CD8-positive, alpha-beta T cell (primary cell): ENCODE measurements at regions of chr16 and their contacts with region 1.

Region 1: DNA sequence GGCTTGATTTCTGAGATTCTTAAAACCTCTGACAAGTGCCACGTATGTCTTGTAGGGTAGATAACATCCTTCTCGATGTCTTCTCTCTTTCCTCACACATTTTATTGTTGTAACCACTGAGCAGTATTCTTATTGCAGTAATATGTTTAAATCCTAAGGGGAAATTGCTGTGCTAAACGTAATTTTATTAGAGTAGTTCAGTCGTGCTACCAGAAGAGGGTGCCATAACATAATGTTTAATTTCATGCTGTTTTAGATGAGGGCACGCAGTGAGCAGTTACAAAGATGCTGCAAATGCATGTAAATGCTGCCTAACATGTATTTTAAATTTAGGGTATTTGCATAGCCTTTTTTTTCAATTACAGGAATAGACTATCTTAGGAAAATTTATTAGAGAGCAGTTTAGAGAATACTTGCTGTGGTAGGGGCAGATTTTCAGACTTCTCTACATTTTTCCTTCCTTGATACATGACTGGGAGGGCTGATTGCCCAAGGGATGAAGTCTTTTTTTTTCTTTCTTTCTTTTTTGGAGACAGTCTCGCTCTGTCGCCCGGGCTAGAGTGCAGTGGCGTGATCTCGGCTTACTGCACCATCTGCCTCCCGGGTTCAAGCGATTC is 51.7 kb downstream of the GAN start:
- DNase-seq: peak in 3 of 9 experiments; percentile 18 to 72 (median 64)
- ATAC-seq: peak; percentile 83
- H3K4me3 ChIP-seq: no peak overlapping the region
- H3K4me3 Mint-ChIP-seq: no peak overlapping the region
- H3K27ac ChIP-seq: no peak overlapping the region
- H3K27ac Mint-ChIP-seq: no peak overlapping the region
- H3K4me1 ChIP-seq: no peaks in the 10 kb centered on the region
- H3K4me1 Mint-ChIP-seq: no peaks in the 10 kb centered on the region
- H3K27me3 ChIP-seq: no peaks in the 10 kb centered on the region
- H3K27me3 Mint-ChIP-seq: no peaks in the 10 kb centered on the region
- CTCF ChIP-seq: peak; percentile 85

Region 2: DNA sequence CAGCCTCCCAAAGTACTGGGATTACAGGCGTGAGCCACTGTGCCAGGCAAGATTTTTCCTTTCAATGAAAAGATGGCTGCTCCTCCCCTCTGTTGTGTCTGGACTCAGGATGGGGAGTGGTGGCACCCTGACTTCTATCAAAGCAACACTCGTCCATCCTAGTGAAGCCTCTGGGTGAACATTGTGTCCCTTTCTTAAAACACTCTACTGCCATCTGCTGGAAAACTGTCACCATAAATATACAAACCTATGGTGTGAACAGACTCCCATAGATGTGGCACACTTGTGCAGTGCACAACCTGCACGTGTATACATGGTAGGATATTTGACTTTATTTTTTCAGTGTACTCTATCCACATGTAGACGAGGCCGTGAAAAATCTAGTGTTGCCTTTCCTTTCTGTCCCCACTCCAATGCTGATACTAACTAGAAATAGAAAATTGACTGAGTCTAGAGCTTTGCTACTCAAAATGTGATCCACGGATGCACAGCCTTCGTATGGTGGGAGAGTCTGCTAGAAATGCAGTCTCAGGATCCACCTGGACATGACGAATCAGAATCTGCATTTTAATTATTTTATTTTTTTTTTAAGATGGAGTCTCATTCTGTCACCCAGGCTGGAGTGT is 356.8 kb after region 1 on chr16:
- CTCF ChIA-PET with region 1: interaction called, 25 read pairs
- POLR2A ChIA-PET with region 1: no interaction called
- intact Hi-C with region 1: loop called in 1 of 2 experiments (anchors 1 kb)
- DNase-seq: peak in 6 of 9 experiments; percentile 27 to 87 (median 58)
- ATAC-seq: peak; percentile 68
- H3K4me3 ChIP-seq: no peak overlapping the region
- H3K4me3 Mint-ChIP-seq: no peak overlapping the region
- H3K27ac ChIP-seq: no peak overlapping the region
- H3K27ac Mint-ChIP-seq: no peak overlapping the region
- H3K4me1 ChIP-seq: peaks cover 6% of the 10 kb centered on the region
- H3K4me1 Mint-ChIP-seq: peaks cover 15% of the 10 kb centered on the region
- H3K27me3 ChIP-seq: no peaks in the 10 kb centered on the region
- H3K27me3 Mint-ChIP-seq: no peaks in the 10 kb centered on the region
- CTCF ChIP-seq: peak; percentile 76

Region 3: DNA sequence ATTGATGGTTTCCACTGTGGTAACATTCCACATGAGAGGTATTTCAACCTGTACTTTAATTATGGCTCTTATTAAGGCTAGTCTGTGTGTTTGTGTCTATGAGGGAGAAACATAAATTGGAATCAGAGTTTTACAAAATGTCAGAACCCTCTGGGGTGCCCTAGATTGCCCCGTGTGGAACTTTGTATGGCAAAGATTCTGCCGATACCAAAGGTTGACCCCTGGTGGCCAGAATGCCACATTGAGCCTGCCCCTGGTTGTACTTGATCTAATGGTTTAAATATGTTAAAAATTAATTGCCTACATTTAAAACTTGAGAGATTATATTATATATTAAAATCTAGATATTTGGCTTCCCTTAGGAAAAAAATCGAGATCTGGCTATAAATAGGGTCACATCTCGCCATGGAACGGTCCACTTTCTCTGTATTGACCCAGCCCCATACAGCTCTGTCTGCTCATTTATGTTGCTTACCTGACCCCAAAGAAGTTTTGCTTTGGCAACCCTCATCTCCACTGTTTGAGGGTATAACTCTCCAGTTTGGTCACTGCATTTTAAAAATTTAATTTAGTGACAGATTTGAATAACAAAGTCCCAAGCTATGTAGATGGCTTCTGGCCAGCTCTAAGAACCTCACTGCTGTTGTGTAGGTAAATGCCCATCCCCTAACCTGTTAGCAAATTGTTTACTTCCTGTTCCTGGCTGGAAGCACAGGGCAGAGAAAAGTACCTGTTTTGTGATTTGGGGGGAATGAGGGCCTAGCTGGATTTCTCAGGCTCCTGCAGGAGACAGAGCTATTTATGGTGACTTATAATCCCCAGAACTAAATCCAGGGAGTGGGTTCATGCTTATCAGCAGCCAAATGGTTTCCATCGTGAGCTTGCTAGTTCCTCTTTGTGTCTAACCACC is 507.7 kb after region 1 on chr16:
- CTCF ChIA-PET with region 1: interaction called, 7 read pairs
- POLR2A ChIA-PET with region 1: no interaction called
- intact Hi-C with region 1: loop called in 1 of 2 experiments (anchors 2 kb)
- DNase-seq: peak; percentile 6 to 76 (median 48)
- ATAC-seq: peak; percentile 74
- H3K4me3 ChIP-seq: no peak overlapping the region
- H3K4me3 Mint-ChIP-seq: no peak overlapping the region
- H3K27ac ChIP-seq: no peak overlapping the region
- H3K27ac Mint-ChIP-seq: no peak overlapping the region
- H3K4me1 ChIP-seq: no peaks in the 10 kb centered on the region
- H3K4me1 Mint-ChIP-seq: peaks cover 15% of the 10 kb centered on the region
- H3K27me3 ChIP-seq: no peaks in the 10 kb centered on the region
- H3K27me3 Mint-ChIP-seq: no peaks in the 10 kb centered on the region
- CTCF ChIP-seq: peak; percentile 81

Region 4: GRCh38 chr16:81885976-81886586 is 519.7 kb after region 1 on chr16:
- CTCF ChIA-PET with region 1: interaction called, 3 read pairs
- POLR2A ChIA-PET with region 1: no interaction called
- intact Hi-C with region 1: loop called (anchors 1 kb)
- DNase-seq: peak in 4 of 9 experiments; percentile 14 to 52 (median 26)
- ATAC-seq: peak; percentile 61
- H3K4me3 ChIP-seq: no peak overlapping the region
- H3K4me3 Mint-ChIP-seq: no peak overlapping the region
- H3K27ac ChIP-seq: no peak overlapping the region
- H3K27ac Mint-ChIP-seq: no peak overlapping the region
- H3K4me1 ChIP-seq: no peaks in the 10 kb centered on the region
- H3K4me1 Mint-ChIP-seq: no peaks in the 10 kb centered on the region
- H3K27me3 ChIP-seq: no peaks in the 10 kb centered on the region
- H3K27me3 Mint-ChIP-seq: no peaks in the 10 kb centered on the region
- CTCF ChIP-seq: peak; percentile 68